Activated B cell treated with CpG ODN at 0.5 μM for 24 hours (primary cell): ENCODE measurements at regions of chr12 and their contacts with region 1.

Region 1: DNA sequence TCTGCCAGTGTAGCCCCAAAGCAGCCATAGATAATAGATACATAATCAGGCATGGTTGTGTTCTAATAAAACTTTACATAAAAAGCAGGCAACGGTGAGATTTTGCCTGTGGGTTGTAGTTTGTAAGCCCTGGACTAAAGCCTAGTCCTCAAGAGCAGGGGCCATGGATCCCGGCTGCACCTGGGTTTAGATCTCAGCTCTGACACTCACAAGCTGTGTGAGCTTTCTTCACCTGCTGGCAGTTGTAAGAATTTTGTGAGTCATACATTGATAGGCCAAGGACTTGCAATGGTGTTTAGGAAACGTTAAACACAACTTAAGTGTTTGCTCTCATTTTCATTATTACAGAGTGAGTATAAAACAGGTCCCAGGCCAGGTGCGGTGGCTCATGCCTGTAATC is 395.8 kb upstream of the TBX3 start:
- DNase-seq: no peak
- ATAC-seq: no peak
- H3K4me3 Mint-ChIP-seq: no peak overlapping the region
- H3K27ac Mint-ChIP-seq: no peak overlapping the region
- H3K4me1 Mint-ChIP-seq: no peaks in the 10 kb centered on the region
- H3K27me3 Mint-ChIP-seq: no peaks in the 10 kb centered on the region
- CTCF ChIP-seq: no peak

Region 2: DNA sequence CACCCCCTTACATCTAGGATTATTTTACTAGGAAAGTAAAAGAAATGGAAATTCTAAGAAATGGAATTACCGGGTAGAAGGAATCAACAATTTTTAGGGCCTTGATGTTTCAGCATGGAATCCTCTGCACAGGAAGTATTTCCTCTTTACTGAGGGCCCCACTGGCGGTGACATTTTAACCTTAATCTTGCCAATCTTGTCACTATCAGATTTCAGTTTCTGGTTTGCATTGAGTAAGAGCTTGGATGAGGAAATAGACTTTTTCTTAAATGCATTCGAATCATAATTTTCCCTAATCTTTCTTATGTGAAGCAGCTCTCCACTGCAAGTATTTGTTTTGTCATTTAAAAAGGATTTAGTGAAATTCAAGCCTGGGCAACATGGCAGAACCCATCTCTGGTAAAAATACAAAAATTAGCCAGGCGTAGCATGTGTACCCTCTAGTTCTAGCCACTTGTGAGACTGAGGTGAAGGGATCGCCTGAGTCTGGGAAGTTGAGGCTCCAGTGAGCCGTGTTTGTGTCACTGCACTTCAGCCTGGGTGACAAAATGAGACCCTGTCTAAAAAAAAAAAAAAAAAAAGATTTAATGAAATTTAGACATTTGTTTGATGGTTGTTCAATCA is 1817.8 kb before region 1 on chr12:
- CTCF ChIA-PET with region 1: no interaction called
- POLR2A ChIA-PET with region 1: interaction called, 10 read pairs
- intact Hi-C with region 1: no loop called
- DNase-seq: no peak
- ATAC-seq: no peak
- H3K4me3 Mint-ChIP-seq: no peak overlapping the region
- H3K27ac Mint-ChIP-seq: no peak overlapping the region
- H3K4me1 Mint-ChIP-seq: peaks cover 26% of the 10 kb centered on the region
- H3K27me3 Mint-ChIP-seq: no peaks in the 10 kb centered on the region
- CTCF ChIP-seq: no peak